Activated naive CD4-positive, alpha-beta T cell treated with anti-CD3 and anti-CD28 coated beads, Interleukin-2, amount 10 ng/mL, durations not matched to agents 7 days and 5 days (primary cell): ENCODE measurements at regions of chr1 and their contacts with region 1.

Region 1: GRCh38 chr1:192580351-192580962 is 4.9 kb downstream of the RGS1 start:
- DNase-seq: peak; percentile 27
- H3K4me3 Mint-ChIP-seq: no peak overlapping the region
- H3K27ac Mint-ChIP-seq: no peak overlapping the region
- H3K4me1 Mint-ChIP-seq: peaks cover 44% of the 10 kb centered on the region
- H3K27me3 Mint-ChIP-seq: no peaks in the 10 kb centered on the region

Region 2: DNA sequence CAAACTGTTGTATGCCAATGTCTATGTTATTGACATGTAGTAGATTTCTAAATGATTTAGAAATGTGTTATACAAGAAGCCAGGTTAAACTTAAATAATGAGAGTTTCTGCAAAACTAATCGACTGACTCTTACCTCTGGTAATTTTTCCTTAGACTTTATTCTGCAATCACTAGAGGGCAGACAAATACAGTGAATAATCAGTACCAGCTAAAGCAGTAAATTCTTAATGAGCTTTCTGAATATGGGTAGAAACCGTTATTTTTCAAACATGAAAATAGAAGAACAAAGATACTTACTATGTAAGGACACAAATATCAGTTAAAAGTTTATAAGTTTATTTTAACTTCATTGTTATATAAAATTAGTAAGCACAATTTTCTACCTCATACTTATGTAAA is 102.8 kb before region 1 on chr1:
- CTCF ChIA-PET with region 1: interaction called, 93 read pairs
- DNase-seq: no peak
- H3K4me3 Mint-ChIP-seq: no peak overlapping the region
- H3K27ac Mint-ChIP-seq: no peak overlapping the region
- H3K4me1 Mint-ChIP-seq: no peaks in the 10 kb centered on the region
- H3K27me3 Mint-ChIP-seq: peaks cover 23% of the 10 kb centered on the region

Region 3: GRCh38 chr1:192506741-192507155 is 73.7 kb before region 1 on chr1:
- CTCF ChIA-PET with region 1: interaction called, 22 read pairs
- DNase-seq: peak; percentile 29
- H3K4me3 Mint-ChIP-seq: no peak overlapping the region
- H3K27ac Mint-ChIP-seq: no peak overlapping the region
- H3K4me1 Mint-ChIP-seq: peaks cover 2% of the 10 kb centered on the region
- H3K27me3 Mint-ChIP-seq: no peaks in the 10 kb centered on the region